Ascending aorta (tissue), 2 donors: ENCODE measurements at regions of chr10 and their contacts with region 1.

Region 1: DNA sequence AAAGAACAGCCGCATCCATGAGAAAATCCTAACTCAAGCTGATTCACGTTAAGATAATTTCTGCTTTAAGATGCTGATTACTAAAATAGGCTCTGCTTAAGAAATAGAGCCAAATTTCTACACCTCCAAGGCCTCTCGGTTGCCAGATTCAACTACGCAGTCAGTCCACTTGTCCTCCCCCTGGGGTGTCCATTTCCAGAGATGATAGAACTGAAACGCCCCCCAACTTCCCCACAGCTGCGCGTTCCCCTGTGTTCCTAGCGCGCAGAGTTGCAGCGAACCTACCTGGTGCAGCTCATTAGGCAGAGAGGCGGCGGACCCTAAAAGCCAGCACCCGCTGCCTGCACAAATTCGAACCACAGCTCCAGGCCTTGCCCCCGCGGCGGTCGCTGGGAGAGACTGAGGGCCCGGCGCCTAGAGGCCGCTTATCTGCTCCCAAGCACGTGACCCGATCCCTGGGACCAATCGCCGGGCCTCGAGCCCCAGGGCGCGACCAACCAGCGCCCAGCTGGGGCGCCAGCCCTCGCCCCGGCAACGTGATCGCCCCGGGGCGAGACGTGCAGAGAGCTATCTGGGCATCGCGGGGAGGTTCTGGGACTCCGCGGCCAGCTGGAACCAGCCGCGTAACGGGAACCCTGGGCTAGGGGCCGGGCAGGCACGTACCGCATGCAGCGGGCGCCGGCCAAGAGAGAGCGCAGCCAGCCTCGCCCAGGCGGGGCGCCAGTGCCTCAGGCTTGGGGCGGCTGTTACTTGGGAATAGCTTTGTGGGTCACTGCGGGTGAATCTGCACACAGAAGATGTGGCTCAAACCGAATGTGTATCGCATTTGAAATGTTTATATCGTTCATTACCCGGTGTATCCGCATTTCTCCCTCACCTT is at the start of gene PPP1R3C:
- DNase-seq: peak; percentile 86 to 95
- H3K4me3 ChIP-seq: peak within 1 kb of the TSS; percentile 76 to 84
- H3K27ac ChIP-seq: peak within 1 kb of the TSS; percentile 76 to 82
- H3K4me1 ChIP-seq: peaks cover 0 to 7% of the 10 kb centered on the region in 2 donors
- H3K27me3 ChIP-seq: no peaks in the 10 kb centered on the region
- CTCF ChIP-seq: peak; percentile 17 to 33 (median 31)
- total RNA-seq, gene PPP1R3C: 2.0 TPM

Region 2: DNA sequence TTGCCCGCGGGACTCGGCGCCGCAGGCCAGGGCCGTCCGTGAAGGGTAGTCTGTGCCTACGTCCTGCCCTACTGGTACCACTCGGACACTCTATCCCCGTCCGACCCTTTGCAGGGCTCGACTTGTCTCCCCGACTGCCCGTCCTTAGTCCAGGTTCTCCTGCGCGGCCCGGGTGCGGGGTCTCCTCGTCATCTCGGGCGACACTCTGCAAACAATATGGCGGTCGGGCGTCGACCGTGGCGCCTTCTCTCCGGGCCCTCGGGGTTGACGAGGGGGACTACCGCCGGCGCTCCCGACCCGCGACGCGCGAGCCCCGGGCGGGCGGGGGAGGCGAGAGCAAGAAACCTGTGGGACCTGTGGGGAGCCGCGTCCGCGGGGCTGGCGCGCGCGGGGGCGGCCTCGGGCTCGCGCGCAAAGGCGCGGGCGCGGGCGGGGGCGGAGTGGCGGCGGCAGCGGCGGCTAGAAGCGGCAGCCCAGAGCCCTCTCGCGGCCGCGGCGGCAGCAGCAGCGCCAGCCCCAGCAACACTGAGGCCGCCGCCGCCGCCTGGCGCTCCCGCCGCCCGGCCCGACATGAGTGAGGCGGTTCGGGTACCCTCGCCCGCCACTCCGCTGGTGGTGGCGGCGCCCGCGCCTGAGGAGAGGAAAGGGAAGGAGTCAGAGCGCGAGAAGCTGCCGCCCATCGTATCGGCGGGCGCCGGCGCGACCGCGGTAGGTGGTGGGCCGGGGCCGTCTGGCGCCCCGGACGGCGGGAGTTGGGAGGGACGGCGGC is 222.9 kb before region 1 on chr10 and contains the start of gene HECTD2:
- intact Hi-C with region 1: loop called (anchors 2 kb)
- DNase-seq: peak in 1 of 2 donors; percentile 85
- H3K4me3 ChIP-seq: peak within 1 kb of the TSS; percentile 90 to 95
- H3K27ac ChIP-seq: peak within 1 kb of the TSS; percentile 99 to 100
- H3K4me1 ChIP-seq: peaks cover 2 to 7% of the 10 kb centered on the region in 2 donors
- H3K27me3 ChIP-seq: no peaks in the 10 kb centered on the region
- CTCF ChIP-seq: peak in 2 of 3 experiments; percentile 36 to 76
- total RNA-seq, gene HECTD2: 25.4 TPM

Region 3: GRCh38 chr10:91511549-91512330 is 121.2 kb before region 1 on chr10:
- intact Hi-C with region 1: loop called (anchors 5 kb)
- DNase-seq: no peak
- H3K4me3 ChIP-seq: no peak overlapping the region
- H3K27ac ChIP-seq: no peak overlapping the region
- H3K4me1 ChIP-seq: peaks cover 0 to 2% of the 10 kb centered on the region in 2 donors
- H3K27me3 ChIP-seq: no peaks in the 10 kb centered on the region
- CTCF ChIP-seq: no peak

Region 4: DNA sequence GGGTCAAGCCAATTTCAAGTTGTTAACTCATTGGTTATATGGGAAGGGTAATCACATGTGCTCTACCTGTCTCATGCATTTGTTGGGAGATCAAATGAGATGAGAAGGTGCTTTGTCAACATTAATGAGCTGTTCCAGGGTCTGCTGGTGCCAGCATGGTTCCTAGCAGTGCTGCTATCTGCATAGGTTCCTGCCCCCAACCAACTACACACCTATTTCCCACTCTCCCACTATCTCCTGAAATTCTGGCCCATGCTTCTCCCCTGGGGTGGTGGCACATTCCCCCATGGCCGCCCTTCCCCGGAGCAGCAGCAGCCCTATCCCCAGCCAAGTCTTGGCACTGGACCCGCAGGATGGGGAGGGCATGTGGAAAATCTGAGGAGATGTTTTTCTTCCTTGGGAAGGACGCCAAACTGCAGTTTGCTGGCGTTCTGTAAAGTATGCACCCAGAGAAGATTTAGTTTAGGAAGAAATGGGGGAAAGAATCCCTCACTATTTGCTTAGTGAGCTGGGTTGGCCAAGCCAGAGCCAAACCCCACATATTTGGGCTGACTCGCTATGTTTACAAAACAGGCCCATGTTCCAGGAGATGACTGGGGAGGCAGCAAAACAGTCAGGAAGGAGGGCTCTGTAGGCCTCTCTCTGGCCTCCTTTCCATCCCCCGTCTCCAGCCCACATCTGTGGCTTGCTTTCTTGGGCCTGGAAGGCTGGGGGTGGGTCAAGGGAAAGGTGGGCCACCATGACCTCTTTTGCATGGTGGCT is 42.6 kb before region 1 on chr10:
- intact Hi-C with region 1: loop called (anchors 1 kb)
- DNase-seq: peak in 1 of 2 donors; percentile 94
- H3K4me3 ChIP-seq: peak overlapping the region in 1 of 2 donors; percentile 22
- H3K27ac ChIP-seq: peak overlapping the region; percentile 93 to 97
- H3K4me1 ChIP-seq: peaks cover 39 to 71% of the 10 kb centered on the region in 2 donors
- H3K27me3 ChIP-seq: no peaks in the 10 kb centered on the region
- CTCF ChIP-seq: no peak

Region 5: GRCh38 chr10:91745074-91745832 is 112.3 kb after region 1 on chr10:
- intact Hi-C with region 1: loop called (anchors 5 kb)
- DNase-seq: no peak
- H3K4me3 ChIP-seq: no peak overlapping the region
- H3K27ac ChIP-seq: no peak overlapping the region
- H3K4me1 ChIP-seq: no peaks in the 10 kb centered on the region
- H3K27me3 ChIP-seq: no peaks in the 10 kb centered on the region
- CTCF ChIP-seq: peak in 2 of 3 experiments; percentile 18 to 45

Region 6: GRCh38 chr10:91883549-91884444 is 250.9 kb after region 1 on chr10:
- intact Hi-C with region 1: no loop called
- DNase-seq: peak in 1 of 2 donors; percentile 81
- H3K4me3 ChIP-seq: peak overlapping the region in 1 of 2 donors; percentile 55
- H3K27ac ChIP-seq: peak overlapping the region; percentile 87 to 94
- H3K4me1 ChIP-seq: peaks cover 3 to 24% of the 10 kb centered on the region in 2 donors
- H3K27me3 ChIP-seq: no peaks in the 10 kb centered on the region
- CTCF ChIP-seq: no peak

Region 7: GRCh38 chr10:91923371-91924211 is 290.7 kb after region 1 on chr10 and contains the start of gene BTAF1:
- intact Hi-C with region 1: loop called (anchors 5 kb)
- DNase-seq: peak; percentile 52 to 94
- H3K4me3 ChIP-seq: peak within 1 kb of the TSS; percentile 89 to 97
- H3K27ac ChIP-seq: peak within 1 kb of the TSS; percentile 94 to 98
- H3K4me1 ChIP-seq: peaks cover 2 to 10% of the 10 kb centered on the region in 2 donors
- H3K27me3 ChIP-seq: no peaks in the 10 kb centered on the region
- CTCF ChIP-seq: no peak
- total RNA-seq, gene BTAF1: 19.9 TPM